Heart left ventricle (tissue), 16 donors: ENCODE measurements at regions of chr11 and their contacts with region 1.

Region 1: GRCh38 chr11:14892036-14892567 is at the start of gene CYP2R1:
- DNase-seq: peak; percentile 95 to 98 (median 97)
- ATAC-seq: peak; percentile 99 to 100 (median 99)
- H3K4me3 ChIP-seq: peak within 1 kb of the TSS; percentile 64 to 92 (median 70)
- H3K27ac ChIP-seq: peak within 1 kb of the TSS; percentile 40 to 96 (median 86)
- H3K4me1 ChIP-seq: peaks cover 0 to 28% (median 9%) of the 10 kb centered on the region in 12 donors
- H3K27me3 ChIP-seq: no peaks in the 10 kb centered on the region
- CTCF ChIP-seq: peak in 2 of 12 donors; percentile 5 to 6
- POLR2A ChIP-seq: peak in 1 of 2 donors; percentile 50
- total RNA-seq, gene CYP2R1: 4.4 to 12.3 (median 7.5) TPM

Region 2: DNA sequence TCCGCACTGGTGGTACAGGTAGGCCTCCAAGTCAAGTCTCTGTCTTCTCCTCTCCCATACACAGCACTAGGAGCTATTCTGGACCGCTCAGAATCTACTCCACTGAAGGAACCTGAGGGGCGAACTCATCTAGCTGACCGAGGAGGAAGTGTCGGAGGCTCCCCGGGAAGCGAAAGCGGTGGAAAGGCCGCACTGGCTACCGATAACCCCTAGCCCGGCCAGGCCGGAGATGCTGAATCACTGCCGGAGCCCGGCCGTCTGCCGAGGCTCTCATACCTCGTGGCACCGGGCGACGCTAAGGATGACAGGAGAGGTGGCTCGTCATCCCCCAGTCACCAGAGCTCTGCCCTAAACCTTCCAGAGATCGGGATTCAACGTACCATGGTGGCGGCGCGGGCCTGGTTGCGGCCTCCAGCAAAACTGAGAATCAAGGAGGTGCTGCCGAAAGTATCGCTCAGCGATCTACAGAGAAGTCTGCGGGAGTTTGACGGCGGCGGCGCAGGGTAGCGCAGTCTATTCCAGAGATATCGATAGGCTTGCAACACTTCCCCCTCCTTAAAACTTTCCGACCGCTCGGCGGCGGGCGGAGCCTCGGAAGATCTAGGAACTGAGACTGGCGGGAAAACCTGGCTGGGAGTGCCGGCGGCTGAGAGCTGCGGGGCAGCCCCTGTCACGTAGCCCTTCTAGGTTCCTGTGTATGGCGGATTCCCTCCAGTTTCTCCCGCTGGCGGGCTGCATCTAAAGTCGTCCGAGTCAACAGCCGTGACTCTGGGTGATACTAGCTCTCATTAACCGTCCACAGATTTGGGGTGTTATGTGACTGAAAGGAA is 372.0 kb before region 1 on chr11 and contains the start of gene PSMA1:
- intact Hi-C with region 1: loop called in 6 of 10 experiments (anchors 1 to 5 kb)
- DNase-seq: peak; percentile 94 to 96 (median 95)
- ATAC-seq: peak; percentile 98
- H3K4me3 ChIP-seq: peak within 1 kb of the TSS; percentile 55 to 99 (median 81)
- H3K27ac ChIP-seq: peak within 1 kb of the TSS; percentile 69 to 96 (median 88)
- H3K4me1 ChIP-seq: peaks cover 5 to 24% (median 15%) of the 10 kb centered on the region in 12 donors
- H3K27me3 ChIP-seq: no peaks in the 10 kb centered on the region
- CTCF ChIP-seq: peak in 11 of 12 donors; percentile 16 to 59 (median 43)
- POLR2A ChIP-seq: peak in 1 of 2 donors; percentile 77
- total RNA-seq, gene PSMA1: 95.5 to 136 (median 129) TPM

Region 3: GRCh38 chr11:14529933-14530332 is 362.2 kb before region 1 on chr11:
- intact Hi-C with region 1: loop called in 3 of 10 experiments (anchors 5 kb)
- DNase-seq: no peak
- ATAC-seq: no peak
- H3K4me3 ChIP-seq: no peak overlapping the region
- H3K27ac ChIP-seq: no peak overlapping the region
- H3K4me1 ChIP-seq: no peaks in the 10 kb centered on the region
- H3K27me3 ChIP-seq: no peaks in the 10 kb centered on the region
- CTCF ChIP-seq: no peak
- POLR2A ChIP-seq: no peak

Region 4: GRCh38 chr11:14537134-14537599 is 354.9 kb before region 1 on chr11:
- intact Hi-C with region 1: loop called in 4 of 10 experiments (anchors 5 kb)
- DNase-seq: no peak
- ATAC-seq: no peak
- H3K4me3 ChIP-seq: peak overlapping the region in 1 of 12 donors; percentile 23
- H3K27ac ChIP-seq: peak overlapping the region in 4 of 12 donors; percentile 42 to 74 (median 54)
- H3K4me1 ChIP-seq: peaks cover 0 to 45% (median 29%) of the 10 kb centered on the region in 12 donors
- H3K27me3 ChIP-seq: no peaks in the 10 kb centered on the region
- CTCF ChIP-seq: peak; percentile 66 to 86 (median 78)
- POLR2A ChIP-seq: no peak

Region 5: GRCh38 chr11:14544611-14545010 is 347.5 kb before region 1 on chr11:
- intact Hi-C with region 1: loop called in 3 of 10 experiments (anchors 5 kb)
- DNase-seq: no peak
- ATAC-seq: no peak
- H3K4me3 ChIP-seq: no peak overlapping the region
- H3K27ac ChIP-seq: no peak overlapping the region
- H3K4me1 ChIP-seq: peaks cover 0 to 40% (median 17%) of the 10 kb centered on the region in 12 donors
- H3K27me3 ChIP-seq: no peaks in the 10 kb centered on the region
- CTCF ChIP-seq: no peak
- POLR2A ChIP-seq: no peak

Region 6: DNA sequence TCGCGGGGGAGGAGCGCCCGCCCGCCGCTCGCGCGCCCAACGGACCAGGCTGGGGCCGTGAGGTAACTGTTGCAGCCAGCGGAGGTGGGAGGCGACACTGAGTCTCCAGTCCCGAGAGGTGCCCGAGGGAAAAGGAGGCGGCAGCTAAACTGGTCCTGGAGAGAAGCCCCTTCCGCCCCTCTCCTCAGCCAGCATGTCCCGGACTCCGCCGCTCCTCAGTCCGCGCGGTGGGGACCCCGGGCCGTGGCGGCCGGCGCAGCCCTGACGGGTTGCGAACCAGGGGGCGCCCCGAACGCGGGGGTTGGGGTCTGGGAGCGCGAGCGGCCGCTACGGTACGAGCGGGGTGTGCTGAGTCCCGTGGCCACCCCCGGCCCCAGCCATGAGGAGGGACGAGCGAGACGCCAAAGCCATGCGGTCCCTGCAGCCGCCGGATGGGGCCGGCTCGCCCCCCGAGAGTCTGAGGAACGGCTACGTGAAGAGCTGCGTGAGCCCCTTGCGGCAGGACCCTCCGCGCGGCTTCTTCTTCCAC is 248.3 kb before region 1 on chr11 and contains the start of gene PDE3B:
- intact Hi-C with region 1: loop called in 5 of 10 experiments (anchors 5 to 10 kb)
- DNase-seq: peak; percentile 82 to 91 (median 87)
- ATAC-seq: peak; percentile 92 to 96 (median 95)
- H3K4me3 ChIP-seq: peak within 1 kb of the TSS; percentile 77 to 91 (median 85)
- H3K27ac ChIP-seq: peak within 1 kb of the TSS; percentile 63 to 94 (median 84)
- H3K4me1 ChIP-seq: peaks cover 0 to 34% (median 1%) of the 10 kb centered on the region in 12 donors
- H3K27me3 ChIP-seq: no peaks in the 10 kb centered on the region
- CTCF ChIP-seq: peak in 1 of 12 donors; percentile 6
- POLR2A ChIP-seq: peak; percentile 32 to 48
- total RNA-seq, gene PDE3B: 7.5 to 17.0 (median 10.4) TPM